Right lobe of liver (tissue), 6 donors: ENCODE measurements at regions of chr3 and their contacts with region 1.

Region 1: DNA sequence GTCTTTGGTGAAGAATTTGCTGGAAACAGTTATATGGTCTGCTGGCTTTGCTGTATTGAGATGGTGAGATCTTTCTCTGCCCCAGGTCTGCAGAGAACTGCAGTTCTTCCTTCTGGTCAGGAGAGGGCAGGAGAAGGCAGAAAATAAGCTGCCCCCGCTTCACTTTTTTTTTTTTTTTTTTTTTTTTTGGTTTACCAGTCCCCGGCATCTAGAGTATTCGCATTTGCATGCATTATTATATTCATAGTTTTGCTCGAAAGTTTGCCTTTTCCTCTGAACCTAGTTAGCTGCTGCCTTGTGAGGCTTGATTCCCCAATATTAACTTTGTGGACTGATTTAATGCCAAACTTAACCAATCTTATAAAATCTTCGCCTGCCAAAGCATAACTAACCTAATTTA is 10.6 kb upstream of the PARL start:
- DNase-seq: no peak
- ATAC-seq: peak; percentile 89 to 91 (median 90)
- H3K4me3 ChIP-seq: no peak overlapping the region
- H3K27ac ChIP-seq: no peak overlapping the region
- H3K4me1 ChIP-seq: peaks cover 0 to 5% (median 0%) of the 10 kb centered on the region in 4 donors
- H3K27me3 ChIP-seq: no peaks in the 10 kb centered on the region
- CTCF ChIP-seq: peak; percentile 65 to 81 (median 74)
- POLR2A ChIP-seq: no peak

Region 2: DNA sequence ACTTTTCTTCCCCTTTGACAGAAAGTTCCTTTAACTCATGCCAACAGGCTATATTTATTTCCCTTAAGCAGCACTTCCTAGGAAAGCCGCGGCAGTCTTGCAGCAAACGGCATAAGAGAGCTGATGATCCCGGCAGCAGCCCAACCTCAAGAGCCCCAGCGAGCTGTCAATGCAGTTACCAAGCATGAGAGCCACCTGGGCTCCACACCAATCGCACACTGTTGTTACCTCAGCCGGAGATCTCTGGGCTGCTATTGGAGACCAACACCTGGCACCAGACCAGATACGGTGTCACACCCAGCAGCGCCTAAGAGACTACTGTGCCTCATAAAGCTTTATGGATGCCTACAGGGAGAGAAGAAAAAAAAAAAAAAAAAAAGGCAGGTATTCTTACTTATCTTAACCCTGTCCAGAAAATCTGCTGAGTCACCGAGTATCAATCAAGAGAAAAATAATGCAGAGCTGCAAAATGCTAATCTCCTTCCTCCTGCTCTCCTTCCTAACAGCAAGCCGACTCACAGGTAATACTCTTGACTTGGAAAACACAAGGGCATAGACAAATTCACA is 110.7 kb after region 1 on chr3:
- intact Hi-C with region 1: no loop called
- DNase-seq: peak in 2 of 3 donors; percentile 30 to 58
- ATAC-seq: peak; percentile 44 to 59 (median 50)
- H3K4me3 ChIP-seq: peak overlapping the region in 1 of 3 donors; percentile 9
- H3K27ac ChIP-seq: peak overlapping the region in 1 of 3 donors; percentile 36
- H3K4me1 ChIP-seq: peaks cover 0 to 4% (median 0%) of the 10 kb centered on the region in 4 donors
- H3K27me3 ChIP-seq: no peaks in the 10 kb centered on the region
- CTCF ChIP-seq: no peak
- POLR2A ChIP-seq: no peak

Region 3: DNA sequence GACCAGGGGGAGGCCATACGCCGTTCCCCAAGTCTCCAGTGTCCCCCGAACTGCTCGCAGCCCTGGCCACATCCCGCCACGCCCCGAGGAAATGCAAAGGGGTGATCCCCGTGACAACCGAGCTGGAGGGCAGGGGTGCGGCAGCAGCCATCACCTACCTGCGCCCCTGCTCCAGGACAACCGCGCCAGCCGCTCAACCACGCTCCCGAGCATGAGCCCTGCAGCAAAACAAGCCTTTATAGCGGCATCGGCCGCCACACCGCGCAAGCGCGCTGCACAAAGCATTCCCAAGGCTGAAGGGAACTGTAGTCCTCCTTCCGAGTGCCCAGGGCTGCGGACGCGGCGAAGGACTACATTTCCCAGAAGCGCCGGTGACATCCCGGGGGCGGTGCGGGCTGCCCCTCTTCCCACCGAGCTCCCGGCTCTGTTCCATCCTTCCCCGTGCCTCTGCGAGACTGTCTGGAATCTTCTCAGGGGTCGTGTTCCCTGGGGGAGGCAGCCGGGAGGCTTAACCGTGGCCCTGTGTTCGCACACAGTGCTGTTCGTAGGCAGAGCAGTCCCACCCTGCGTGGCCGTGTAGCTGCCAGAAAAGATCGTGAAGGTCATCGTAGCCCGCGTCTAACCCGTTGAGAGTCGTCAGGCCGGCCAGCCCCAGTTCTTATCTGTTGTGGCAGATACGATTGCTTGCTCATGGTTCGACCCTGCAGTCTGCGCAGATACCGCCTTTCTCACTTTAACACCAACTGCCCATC is 122.6 kb after region 1 on chr3 and contains the start of gene ABCC5:
- intact Hi-C with region 1: loop called (anchors 5 kb)
- DNase-seq: peak; percentile 94 to 96 (median 95)
- ATAC-seq: peak; percentile 99 to 100 (median 99)
- H3K4me3 ChIP-seq: peak within 1 kb of the TSS; percentile 95 to 100 (median 97)
- H3K27ac ChIP-seq: peak within 1 kb of the TSS; percentile 35 to 74 (median 45)
- H3K4me1 ChIP-seq: no peaks in the 10 kb centered on the region
- H3K27me3 ChIP-seq: no peaks in the 10 kb centered on the region
- CTCF ChIP-seq: peak in 3 of 4 donors; percentile 34 to 49 (median 47)
- POLR2A ChIP-seq: peak; percentile 18
- total RNA-seq, gene ABCC5: 5.5 to 9.4 (median 7.6) TPM

Region 4: GRCh38 chr3:184289426-184289938 is 394.2 kb after region 1 on chr3:
- intact Hi-C with region 1: loop called (anchors 10 kb)
- DNase-seq: peak in 2 of 3 donors; percentile 38 to 66
- ATAC-seq: peak; percentile 73 to 80 (median 76)
- H3K4me3 ChIP-seq: no peak overlapping the region
- H3K27ac ChIP-seq: no peak overlapping the region
- H3K4me1 ChIP-seq: no peaks in the 10 kb centered on the region
- H3K27me3 ChIP-seq: no peaks in the 10 kb centered on the region
- CTCF ChIP-seq: peak; percentile 50 to 64 (median 54)
- POLR2A ChIP-seq: no peak

Region 5: GRCh38 chr3:184298759-184299496 is 403.6 kb after region 1 on chr3 and contains the start of gene PSMD2:
- intact Hi-C with region 1: loop called in 1 of 2 experiments (anchors 10 kb)
- DNase-seq: peak; percentile 98 to 99 (median 99)
- ATAC-seq: peak; percentile 98 to 99 (median 98)
- H3K4me3 ChIP-seq: peak within 1 kb of the TSS; percentile 69 to 99 (median 92)
- H3K27ac ChIP-seq: peak within 1 kb of the TSS; percentile 50 to 80 (median 69)
- H3K4me1 ChIP-seq: peaks cover 0 to 8% (median 6%) of the 10 kb centered on the region in 4 donors
- H3K27me3 ChIP-seq: no peaks in the 10 kb centered on the region
- CTCF ChIP-seq: no peak
- POLR2A ChIP-seq: peak; percentile 73
- total RNA-seq, gene PSMD2: 85.5 to 153 (median 103) TPM